ENCODE measurements at regions of chr10 and their contacts with region 1.

Region 1: DNA sequence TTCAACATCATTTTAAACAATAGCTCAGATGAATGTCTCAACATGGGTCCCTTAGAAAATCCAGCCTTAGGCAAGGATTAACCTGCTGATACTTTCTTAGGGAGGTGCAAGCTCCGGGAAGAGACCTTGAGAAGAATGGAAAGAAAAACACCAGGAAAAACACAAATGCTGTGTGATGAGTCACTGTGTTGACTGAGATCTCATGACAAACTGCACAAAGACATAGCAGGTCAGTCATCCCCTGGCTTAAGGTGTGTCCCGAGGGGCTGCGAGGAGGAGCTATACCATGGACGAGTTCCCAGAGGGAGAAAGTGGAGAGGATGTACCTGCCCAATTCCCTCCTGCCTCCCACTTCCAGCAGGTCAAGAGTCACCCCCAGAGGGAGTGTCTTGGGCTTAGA is 98.0 kb downstream of the TEX36 start:
- DNase-seq: no peak

Region 2: GRCh38 chr10:123991622-123992607 is 1593.0 kb before region 1 on chr10:
- intact Hi-C with region 1: no loop called
- DNase-seq: peak; percentile 79

Region 3: DNA sequence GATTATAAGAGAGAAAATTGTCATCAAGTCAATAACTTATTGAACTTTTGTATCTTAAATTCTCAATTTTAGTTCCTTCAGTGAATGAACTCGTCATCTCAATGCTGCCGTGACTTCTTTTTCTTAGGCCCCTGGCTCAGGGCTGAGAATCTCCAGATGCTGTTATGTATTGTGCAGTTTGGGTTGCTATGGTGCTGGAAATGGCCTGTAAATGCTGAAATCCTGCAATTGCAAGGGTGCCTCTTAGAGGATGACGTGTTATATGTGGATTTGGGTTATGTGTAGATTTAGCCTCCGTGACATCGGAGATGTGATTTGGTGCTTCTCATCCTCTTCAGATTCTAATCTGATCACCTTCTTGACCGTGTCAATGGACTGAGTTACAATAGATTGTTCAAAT is 698.8 kb before region 1 on chr10:
- intact Hi-C with region 1: loop called in 1 of 2 experiments (anchors 10 kb)
- DNase-seq: no peak

Region 4: DNA sequence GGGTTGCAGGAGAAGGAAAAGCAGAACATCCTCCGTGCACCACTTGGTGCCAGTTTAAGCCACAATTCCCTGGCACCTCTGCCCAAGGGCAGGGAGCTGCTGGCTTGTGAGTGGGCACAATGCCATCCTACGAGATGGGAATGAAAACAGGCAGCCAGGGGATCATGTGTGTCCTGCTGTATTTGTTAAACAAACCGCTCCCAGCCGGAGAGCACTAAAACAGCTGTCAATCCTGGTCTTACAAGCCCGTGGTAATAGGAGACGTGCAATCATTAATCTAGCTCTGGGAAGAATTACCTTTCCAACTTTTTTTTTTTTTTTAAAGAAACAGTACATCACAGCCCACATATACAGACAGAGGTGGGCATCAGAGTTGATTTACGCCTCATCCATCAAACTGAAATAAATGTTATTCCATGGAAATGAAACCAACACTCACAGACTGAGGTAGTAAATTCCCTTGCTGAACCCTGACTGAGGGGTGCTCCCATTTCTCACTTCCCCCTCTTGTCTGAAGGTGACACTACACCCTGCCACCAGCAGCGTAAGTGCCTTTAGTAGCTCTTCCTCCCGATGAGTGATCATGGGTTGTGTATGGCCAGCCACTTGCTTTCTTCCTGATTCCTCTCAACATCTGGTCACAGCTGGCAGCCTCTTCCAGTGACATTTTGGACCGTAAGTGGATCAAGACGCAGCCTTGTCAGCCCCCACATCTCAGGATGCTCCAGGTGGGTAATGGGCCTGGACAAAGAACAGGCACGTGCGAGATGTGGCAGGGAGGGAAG is 45.8 kb before region 1 on chr10:
- intact Hi-C with region 1: no loop called
- DNase-seq: no peak